Esophagus muscularis mucosa (tissue), 4 donors: ENCODE measurements at regions of chr5 and their contacts with region 1.

Region 1: DNA sequence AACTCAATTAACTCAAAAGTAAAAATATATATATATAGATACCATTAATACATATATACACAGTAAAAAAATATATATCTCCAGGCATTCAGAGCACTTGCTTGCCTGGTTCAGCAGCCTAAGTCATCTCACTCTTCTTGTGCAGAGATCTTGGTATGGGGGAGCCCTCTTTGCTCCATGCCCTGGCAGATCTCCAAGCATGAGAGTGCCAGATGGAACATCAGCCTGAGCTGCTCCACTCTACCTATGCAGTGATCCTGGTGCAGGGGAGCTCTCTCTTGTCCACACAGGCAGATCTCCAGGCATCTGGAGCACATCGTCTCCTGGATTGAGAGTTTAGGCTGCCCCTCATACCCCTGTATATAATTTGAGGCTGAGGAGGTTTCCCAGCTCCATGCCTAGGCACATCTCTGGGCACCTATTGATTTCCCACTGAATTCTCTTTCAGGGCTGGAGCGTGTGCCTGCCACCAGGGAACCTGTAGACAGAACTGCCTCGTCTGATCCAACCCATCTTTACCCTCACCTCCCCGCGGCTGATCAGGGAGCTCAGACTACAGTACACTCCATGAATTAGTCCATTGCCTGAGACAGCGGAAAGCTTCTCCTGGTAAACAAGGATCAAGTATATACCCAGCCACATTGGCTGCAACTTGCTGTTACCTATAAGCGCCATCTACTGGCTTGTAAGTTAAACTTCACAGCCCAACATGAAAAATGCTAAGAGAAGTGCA is 342.4 kb upstream of the GRIA1 start:
- DNase-seq: no peak
- H3K4me3 ChIP-seq: no peak overlapping the region
- H3K27ac ChIP-seq: no peak overlapping the region
- H3K4me1 ChIP-seq: no peaks in the 10 kb centered on the region
- H3K27me3 ChIP-seq: no peaks in the 10 kb centered on the region
- CTCF ChIP-seq: peak in 1 of 3 experiments; percentile 48
- EP300 ChIP-seq: no peak
- POLR2A ChIP-seq: no peak

Region 2: DNA sequence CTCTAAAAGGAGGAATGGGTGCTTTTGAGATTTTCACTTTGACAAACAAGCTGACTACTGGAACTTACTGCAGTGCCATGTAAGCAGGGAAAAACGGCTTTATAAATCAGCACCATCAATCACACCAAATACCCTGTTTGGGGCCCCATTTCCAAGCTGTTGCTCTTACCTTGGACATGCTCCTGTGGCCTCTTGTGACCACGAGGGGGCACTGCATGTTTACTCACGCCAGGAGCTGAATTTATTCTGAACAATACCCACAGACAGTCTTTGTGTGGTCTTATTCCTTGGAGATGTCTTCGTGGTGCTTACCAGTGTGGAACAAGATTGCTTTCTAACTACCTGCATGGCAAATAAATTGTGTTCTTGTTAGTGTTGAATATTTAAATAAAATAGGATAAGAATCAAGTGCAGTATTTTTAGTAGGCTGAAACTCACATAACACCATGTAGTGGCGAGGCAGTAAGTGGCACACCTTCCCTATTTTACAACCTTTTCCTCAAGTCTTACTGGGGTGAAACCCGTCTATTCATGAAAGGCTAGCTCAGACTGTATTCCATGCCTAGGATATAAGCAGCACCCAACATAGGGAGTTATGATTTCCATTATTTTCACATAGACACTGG is 587.4 kb before region 1 on chr5:
- intact Hi-C with region 1: loop called (anchors 5 kb)
- DNase-seq: no peak
- H3K4me3 ChIP-seq: no peak overlapping the region
- H3K27ac ChIP-seq: no peak overlapping the region
- H3K4me1 ChIP-seq: no peaks in the 10 kb centered on the region
- H3K27me3 ChIP-seq: no peaks in the 10 kb centered on the region
- CTCF ChIP-seq: peak; percentile 55 to 71 (median 58)
- EP300 ChIP-seq: no peak
- POLR2A ChIP-seq: no peak

Region 3: DNA sequence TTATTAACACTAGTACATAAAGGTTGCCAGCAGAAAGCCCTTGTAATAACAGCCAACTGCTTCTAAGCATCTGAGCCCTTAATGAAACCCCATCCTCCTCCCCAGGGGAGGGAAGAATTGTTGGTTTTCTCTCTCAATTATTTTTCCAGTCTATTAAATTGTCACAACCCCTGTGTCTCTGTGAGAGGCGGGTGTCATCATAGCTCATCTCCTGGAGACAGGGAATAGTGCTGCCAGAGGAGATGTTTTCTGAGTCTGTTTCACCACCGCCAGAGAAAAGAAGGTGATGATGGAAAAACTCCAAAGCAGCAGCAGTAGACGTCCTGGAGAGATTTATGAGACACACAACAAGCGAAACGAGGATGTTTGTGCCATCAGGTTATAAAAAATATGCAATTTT is 471.9 kb before region 1 on chr5:
- intact Hi-C with region 1: no loop called
- DNase-seq: no peak
- H3K4me3 ChIP-seq: no peak overlapping the region
- H3K27ac ChIP-seq: no peak overlapping the region
- H3K4me1 ChIP-seq: no peaks in the 10 kb centered on the region
- H3K27me3 ChIP-seq: no peaks in the 10 kb centered on the region
- CTCF ChIP-seq: no peak
- EP300 ChIP-seq: no peak
- POLR2A ChIP-seq: no peak